ENCODE measurements at regions of chr19 and their contacts with region 1.

Region 1: GRCh38 chr19:4400135-4400936 is at the start of gene SH3GL1:
- DNase-seq: peak; percentile 74 to 96
- H3K4me3 ChIP-seq: peak within 1 kb of the TSS; percentile 82 to 96
- H3K27ac ChIP-seq: peak within 1 kb of the TSS; percentile 89 to 91
- H3K4me1 ChIP-seq: peaks cover 7 to 12% of the 10 kb centered on the region in 2 donors
- H3K27me3 ChIP-seq: no peaks in the 10 kb centered on the region
- CTCF ChIP-seq: peak; percentile 91 to 99 (median 96)
- total RNA-seq, gene SH3GL1: 61.4 TPM

Region 2: DNA sequence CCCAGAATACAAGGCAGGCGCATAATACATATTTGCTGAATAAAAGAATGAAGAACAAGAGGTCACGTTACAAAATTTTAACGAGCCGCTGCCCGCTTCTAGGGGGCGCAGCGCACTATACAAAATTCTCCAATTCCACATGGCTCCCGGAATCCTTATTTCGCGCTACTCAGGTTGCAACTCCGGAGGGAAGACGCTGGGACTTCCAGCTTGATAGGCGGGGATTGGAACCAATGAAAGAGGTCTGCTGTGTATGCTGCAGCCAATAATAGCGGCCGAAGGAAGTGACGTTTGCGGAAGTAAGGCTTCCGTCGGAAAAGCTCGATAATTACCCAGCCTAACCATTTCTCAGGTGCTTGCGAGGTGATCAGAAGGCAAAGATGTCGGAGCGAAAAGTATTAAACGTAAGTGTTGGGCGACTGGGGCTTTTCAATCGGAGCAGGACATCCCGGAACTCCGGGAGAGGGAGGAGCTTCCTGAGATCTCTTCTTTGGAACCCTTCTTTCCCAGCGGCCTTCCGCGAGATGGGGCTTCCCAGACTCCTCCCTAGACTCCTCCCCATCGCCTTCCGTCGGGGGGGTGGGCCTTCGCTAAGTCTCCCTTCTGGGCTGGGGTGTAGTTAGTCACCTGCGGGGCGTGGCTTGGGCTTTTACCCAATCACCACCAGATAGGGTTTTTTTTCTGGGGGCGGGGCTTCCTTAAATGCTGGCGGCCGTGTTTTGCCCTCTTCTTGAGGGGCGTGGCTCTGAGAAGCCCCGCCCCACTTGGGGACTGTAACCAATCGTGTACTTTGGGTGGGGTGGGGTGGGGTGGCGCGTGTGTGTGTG is 153.4 kb before region 1 on chr19 and contains the start of gene YJU2:
- intact Hi-C with region 1: loop called (anchors 2 kb)
- DNase-seq: peak; percentile 97 to 99
- H3K4me3 ChIP-seq: peak within 1 kb of the TSS; percentile 67 to 77
- H3K27ac ChIP-seq: peak within 1 kb of the TSS; percentile 90 to 96
- H3K4me1 ChIP-seq: peaks cover 0 to 4% of the 10 kb centered on the region in 2 donors
- H3K27me3 ChIP-seq: no peaks in the 10 kb centered on the region
- CTCF ChIP-seq: peak; percentile 39 to 52 (median 41)
- total RNA-seq, gene YJU2: 64.6 TPM

Region 3: GRCh38 chr19:4328243-4328990 is 71.9 kb before region 1 on chr19:
- intact Hi-C with region 1: loop called (anchors 1 kb)
- DNase-seq: peak; percentile 74 to 94
- H3K4me3 ChIP-seq: peak overlapping the region; percentile 50 to 66
- H3K27ac ChIP-seq: no peak overlapping the region
- H3K4me1 ChIP-seq: peaks cover 6 to 8% of the 10 kb centered on the region in 2 donors
- H3K27me3 ChIP-seq: no peaks in the 10 kb centered on the region
- CTCF ChIP-seq: no peak

Region 4: DNA sequence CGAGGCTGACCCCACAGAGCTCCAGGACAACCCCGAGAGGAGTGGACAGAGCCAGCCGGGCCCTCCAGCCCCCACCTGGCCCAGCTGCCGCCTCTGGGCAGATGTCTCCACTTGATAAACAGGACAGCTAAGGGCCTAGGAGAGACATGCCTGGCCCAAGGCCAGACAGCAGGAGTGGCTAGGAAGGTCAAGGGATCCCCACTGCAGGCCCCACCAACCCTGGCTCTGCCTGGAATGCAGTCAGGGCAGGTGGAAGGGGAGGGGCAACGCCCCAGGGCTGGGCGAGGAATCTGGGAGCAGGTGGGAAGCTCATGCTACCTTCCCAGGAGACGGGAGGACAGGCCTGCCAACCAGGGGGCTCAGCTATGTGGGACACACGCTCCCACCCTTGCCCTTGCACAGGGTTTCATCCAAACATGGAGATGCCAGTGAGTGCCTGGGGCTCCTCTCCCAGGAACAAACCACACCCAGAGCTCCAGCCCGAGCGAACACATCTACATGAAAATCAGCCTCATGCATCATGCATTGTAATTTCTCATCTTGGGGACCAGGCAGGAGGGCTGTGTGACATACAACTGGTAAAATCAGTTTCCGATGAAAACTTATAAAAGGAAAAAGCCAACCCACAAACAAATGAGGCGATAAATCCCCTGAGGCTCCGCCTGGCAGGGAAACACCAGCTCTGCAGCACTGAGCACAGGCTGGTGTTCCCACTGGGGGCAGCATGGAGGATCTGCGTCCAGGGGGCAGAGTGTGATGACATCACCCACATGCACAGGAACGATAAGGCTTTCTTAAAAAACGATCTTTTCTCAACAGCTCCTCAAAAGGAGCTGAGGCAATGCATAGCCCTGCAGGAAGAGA is 24.9 kb before region 1 on chr19:
- intact Hi-C with region 1: loop called (anchors 1 kb)
- DNase-seq: peak in 1 of 2 donors; percentile 82
- H3K4me3 ChIP-seq: peak overlapping the region in 1 of 2 donors; percentile 16
- H3K27ac ChIP-seq: peak overlapping the region; percentile 91 to 98
- H3K4me1 ChIP-seq: peaks cover 58 to 86% of the 10 kb centered on the region in 2 donors
- H3K27me3 ChIP-seq: no peaks in the 10 kb centered on the region
- CTCF ChIP-seq: peak; percentile 25 to 49 (median 25)

Region 5: GRCh38 chr19:4471403-4472173 is 71.3 kb after region 1 on chr19:
- intact Hi-C with region 1: loop called (anchors 5 kb)
- DNase-seq: peak; percentile 99 to 100
- H3K4me3 ChIP-seq: peak overlapping the region; percentile 94 to 100
- H3K27ac ChIP-seq: peak overlapping the region; percentile 58 to 81
- H3K4me1 ChIP-seq: peaks cover 7 to 28% of the 10 kb centered on the region in 2 donors
- H3K27me3 ChIP-seq: no peaks in the 10 kb centered on the region
- CTCF ChIP-seq: no peak